Endothelial cell of umbilical vein (primary cell): ENCODE measurements at regions of chr7 and their contacts with region 1.

Region 1: DNA sequence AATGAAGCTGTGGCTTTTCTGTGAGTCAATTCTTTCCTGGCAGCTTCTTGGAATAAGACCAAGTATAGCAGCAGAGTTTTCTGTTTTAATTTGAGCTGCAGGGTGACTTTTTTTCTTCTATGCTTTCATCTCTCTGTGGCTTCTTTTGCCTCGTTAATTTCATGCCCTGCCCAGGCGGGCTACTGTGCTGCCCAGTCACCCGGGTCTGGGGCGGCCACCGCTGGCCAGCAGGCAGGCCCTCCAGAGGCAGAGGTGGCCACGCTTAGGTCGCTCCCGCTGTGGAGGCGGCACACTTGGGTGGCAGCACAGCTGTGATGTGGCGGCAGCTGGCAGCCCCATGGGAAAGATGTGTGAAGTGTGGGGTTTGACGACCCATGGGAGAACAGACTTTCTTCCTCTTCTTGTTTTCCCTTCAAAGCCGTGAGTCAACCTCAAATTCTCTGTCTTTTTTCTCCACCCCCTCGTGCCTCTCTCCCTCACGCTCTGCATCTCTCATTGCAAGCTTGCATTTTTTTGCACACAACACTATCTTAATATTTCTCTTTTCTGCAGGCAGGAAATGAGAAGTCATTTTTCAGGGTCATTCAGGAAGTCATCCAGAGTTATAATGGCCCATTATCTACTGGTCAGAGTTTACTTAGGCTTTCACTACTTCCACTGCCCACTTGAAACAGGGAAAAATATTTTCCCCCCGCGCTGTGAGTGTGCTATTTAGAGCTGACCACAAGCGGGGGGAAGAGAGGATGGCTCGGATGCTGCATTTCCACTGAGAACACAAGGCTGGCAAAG is 67.8 kb downstream of the EGFR start:
- DNase-seq: peak; percentile 64
- H3K4me3 ChIP-seq: no peak overlapping the region
- H3K27ac ChIP-seq: no peak overlapping the region
- H3K4me1 ChIP-seq: peaks cover 16% of the 10 kb centered on the region
- H3K27me3 ChIP-seq: peaks cover 44 to 58% of the 10 kb centered on the region in 2 experiments
- CTCF ChIP-seq: no peak
- POLR2A ChIP-seq: no peak

Region 2: DNA sequence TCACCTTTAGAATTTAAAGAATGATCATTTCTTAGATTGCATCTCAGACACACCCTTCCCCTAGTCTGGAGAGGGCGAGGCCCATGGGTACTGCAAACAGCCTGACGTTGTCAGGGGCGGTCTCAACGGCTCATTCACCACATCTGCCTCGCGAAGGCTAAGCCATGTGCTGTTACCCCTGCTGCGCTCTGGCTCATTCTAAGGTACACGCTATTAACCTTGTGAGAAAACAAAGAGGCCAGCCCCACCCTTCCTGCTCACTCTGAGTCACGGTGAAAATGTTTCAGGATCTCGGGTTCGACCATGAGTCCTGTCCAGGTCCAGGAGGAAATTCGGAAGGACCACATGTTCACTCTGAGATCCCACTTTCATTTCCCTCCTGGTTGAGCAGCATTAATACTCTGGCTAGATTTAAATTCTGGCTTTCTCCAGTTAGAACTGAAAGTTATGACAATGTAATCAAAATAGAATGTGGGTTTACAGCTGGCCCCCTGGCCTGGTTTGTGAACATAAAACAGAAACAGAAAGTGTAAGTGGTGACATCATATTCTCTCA is 12.6 kb before region 1 on chr7:
- CTCF ChIA-PET with region 1: interaction called, 13 read pairs
- POLR2A ChIA-PET with region 1: no interaction called
- dilution Hi-C with region 1: no loop called
- intact Hi-C with region 1: loop called (anchors 1 kb)
- DNase-seq: peak; percentile 32
- H3K4me3 ChIP-seq: no peak overlapping the region
- H3K27ac ChIP-seq: no peak overlapping the region
- H3K4me1 ChIP-seq: peaks cover 9% of the 10 kb centered on the region
- H3K27me3 ChIP-seq: no peaks in the 10 kb centered on the region
- CTCF ChIP-seq: no peak
- POLR2A ChIP-seq: no peak

Region 3: DNA sequence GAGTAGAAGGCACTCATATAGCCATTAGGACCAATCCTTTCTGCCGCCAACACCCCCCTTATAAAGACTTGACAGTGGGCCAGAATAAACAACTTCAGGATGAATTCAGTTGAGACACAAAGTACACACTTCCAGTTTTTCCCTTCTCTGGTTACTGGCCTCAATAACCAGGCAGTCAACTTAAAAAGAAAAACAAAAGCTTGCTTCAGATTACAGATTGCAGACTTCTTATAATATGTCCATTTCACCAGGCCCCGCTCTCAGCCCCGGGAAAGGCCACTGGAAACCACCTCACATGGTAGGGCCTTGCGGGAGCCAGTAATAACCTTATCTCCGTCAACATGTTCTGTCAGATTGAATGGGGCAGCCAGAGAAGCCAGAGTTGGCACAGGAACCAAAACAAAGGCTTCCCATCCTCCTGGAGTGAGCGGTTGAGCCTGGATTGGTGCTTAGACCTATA is 41.0 kb after region 1 on chr7:
- CTCF ChIA-PET with region 1: interaction called, 6 read pairs
- POLR2A ChIA-PET with region 1: no interaction called
- dilution Hi-C with region 1: no loop called
- intact Hi-C with region 1: loop called (anchors 1 kb)
- DNase-seq: peak; percentile 97
- H3K4me3 ChIP-seq: no peak overlapping the region
- H3K27ac ChIP-seq: no peak overlapping the region
- H3K4me1 ChIP-seq: peaks cover 35% of the 10 kb centered on the region
- H3K27me3 ChIP-seq: peaks cover 6 to 7% of the 10 kb centered on the region in 2 experiments
- CTCF ChIP-seq: no peak
- POLR2A ChIP-seq: no peak

Region 4: DNA sequence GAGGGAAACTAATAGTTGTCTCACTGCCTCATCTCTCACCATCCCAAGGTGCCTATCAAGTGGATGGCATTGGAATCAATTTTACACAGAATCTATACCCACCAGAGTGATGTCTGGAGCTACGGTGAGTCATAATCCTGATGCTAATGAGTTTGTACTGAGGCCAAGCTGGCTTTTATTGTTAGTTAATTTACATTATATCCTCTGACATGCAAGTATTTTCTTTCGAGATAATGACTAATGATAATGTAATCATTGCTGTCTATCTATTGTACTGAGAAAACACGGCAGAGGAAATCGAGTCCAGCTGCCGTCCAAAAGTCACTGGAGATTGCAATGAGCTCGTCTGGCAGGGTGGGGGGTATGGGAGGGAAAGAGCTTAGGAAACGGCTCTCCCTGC is 106.1 kb after region 1 on chr7:
- CTCF ChIA-PET with region 1: interaction called, 5 read pairs
- POLR2A ChIA-PET with region 1: no interaction called
- dilution Hi-C with region 1: no loop called
- intact Hi-C with region 1: loop called (anchors 5 kb)
- DNase-seq: peak; percentile 90
- H3K4me3 ChIP-seq: no peak overlapping the region
- H3K27ac ChIP-seq: peak overlapping the region; percentile 80
- H3K4me1 ChIP-seq: peaks cover 42% of the 10 kb centered on the region
- H3K27me3 ChIP-seq: no peaks in the 10 kb centered on the region
- CTCF ChIP-seq: no peak
- POLR2A ChIP-seq: peak; percentile 45